GM12878 (cell line): ENCODE measurements at regions of chr1 and their contacts with region 1.

Region 1: GRCh38 chr1:33472349-33472980 is at the start of gene ZSCAN20:
- DNase-seq: peak; percentile 89
- ATAC-seq: peak; percentile 96
- H3K4me3 ChIP-seq: peak within 1 kb of the TSS; percentile 74
- H3K27ac ChIP-seq: peak within 1 kb of the TSS; percentile 55
- H3K4me1 ChIP-seq: peaks cover 7% of the 10 kb centered on the region
- H3K27me3 ChIP-seq: no peaks in the 10 kb centered on the region
- CTCF ChIP-seq: no peak
- EP300 ChIP-seq: no peak
- POLR2A ChIP-seq: peak; percentile 72
- RAD21 ChIP-seq: no peak
- polyA plus RNA-seq, gene ZSCAN20: 0.35 to 0.37 TPM

Region 2: DNA sequence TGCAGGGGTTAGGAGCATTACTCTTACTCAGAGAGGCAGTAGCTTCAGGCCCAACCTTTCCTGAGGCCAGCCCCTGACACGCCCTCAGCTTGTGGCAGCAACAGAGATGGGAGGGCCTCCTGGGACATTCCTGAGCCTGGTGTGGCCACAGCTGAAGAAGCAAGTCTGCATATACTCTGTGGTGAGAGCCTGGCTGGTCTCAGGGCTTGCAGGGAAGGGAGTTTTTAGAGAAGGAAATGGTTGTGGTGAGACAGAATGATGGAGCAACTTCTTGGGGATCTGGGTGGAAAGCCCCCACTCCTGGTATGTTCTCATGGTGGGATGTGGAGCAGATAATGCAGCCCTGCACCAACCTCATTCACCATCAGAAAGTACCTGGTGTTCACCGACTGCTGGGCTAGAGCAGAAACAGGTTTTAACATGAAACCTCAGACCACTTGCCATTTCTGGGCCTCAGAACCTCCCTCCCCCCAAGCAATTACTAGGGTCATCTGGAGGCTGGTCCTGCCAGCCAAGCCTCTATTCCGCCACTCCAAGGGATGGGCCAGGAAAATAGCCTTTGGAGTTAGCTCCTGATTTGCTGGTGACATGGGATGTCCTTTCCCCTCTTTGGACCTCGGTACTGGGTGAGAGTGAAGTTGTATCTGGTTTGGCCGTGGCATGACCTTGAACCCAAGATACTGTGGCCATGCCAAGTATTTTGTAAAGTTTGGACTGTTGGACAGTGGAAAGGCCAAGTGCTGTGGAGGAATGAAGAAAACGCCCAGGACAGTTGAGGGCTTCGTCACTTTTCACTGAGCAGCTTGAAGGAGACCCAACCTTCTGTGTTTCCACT is 479.8 kb before region 1 on chr1:
- CTCF ChIA-PET with region 1: no interaction called
- POLR2A ChIA-PET with region 1: no interaction called
- RAD21 ChIA-PET with region 1: no interaction called
- SMC1A ChIA-PET with region 1: no interaction called
- in situ Hi-C with region 1: no loop called
- intact Hi-C with region 1: no loop called
- DNase-seq: peak; percentile 98
- ATAC-seq: peak; percentile 90
- H3K4me3 ChIP-seq: peak overlapping the region; percentile 48; the same call in 1 of the 2 replicates
- H3K27ac ChIP-seq: peak overlapping the region; percentile 99
- H3K4me1 ChIP-seq: peaks cover 58% of the 10 kb centered on the region
- H3K27me3 ChIP-seq: no peaks in the 10 kb centered on the region
- CTCF ChIP-seq: no peak
- EP300 ChIP-seq: peak; percentile 58 to 91
- POLR2A ChIP-seq: no peak
- RAD21 ChIP-seq: no peak

Region 3: DNA sequence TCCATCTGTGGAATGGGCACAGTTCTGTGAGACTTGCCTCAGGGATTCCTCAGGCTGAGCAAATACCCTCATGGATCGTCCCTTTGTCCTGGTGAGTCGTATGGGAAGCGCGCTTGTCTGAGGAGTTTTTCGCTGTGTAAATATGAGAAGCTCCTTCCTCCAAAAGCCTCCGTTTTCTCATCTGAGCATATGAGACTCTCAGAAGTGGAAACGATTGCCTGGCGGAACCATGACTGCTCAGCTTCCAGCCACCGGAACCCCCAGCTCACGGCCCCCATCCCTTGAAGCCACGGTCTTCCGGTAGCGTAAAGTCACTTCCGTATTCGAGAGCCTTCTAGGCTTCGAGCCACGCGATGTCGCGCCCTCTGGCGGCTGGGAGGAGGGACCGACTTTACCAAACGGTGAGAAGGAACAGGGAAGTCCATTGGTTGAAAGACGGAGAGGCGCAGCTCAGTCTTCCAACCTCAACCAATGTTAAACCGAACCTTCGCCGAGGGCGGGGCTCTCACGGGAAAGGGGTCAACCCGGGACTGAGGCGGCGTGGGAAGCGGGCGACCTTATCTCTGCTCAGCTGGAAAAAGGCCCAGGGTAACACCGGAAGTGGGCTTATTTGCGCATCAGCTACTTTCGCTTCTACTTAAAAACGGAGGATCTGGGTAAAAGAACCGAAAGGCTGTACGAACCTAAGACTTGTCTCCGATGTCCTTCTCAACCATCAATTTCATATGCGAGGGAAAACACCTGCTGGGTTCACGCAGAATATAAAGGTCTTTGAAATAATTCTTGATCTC is 345.3 kb before region 1 on chr1:
- CTCF ChIA-PET with region 1: interaction called, 14 read pairs
- POLR2A ChIA-PET with region 1: no interaction called
- RAD21 ChIA-PET with region 1: interaction called, 7 read pairs
- SMC1A ChIA-PET with region 1: interaction called, 4 read pairs
- in situ Hi-C with region 1: no loop called
- intact Hi-C with region 1: loop called (anchors 1 kb)
- DNase-seq: peak; percentile 99
- ATAC-seq: peak; percentile 95
- H3K4me3 ChIP-seq: peak overlapping the region; percentile 97
- H3K27ac ChIP-seq: peak overlapping the region; percentile 97
- H3K4me1 ChIP-seq: peaks cover 18% of the 10 kb centered on the region
- H3K27me3 ChIP-seq: no peaks in the 10 kb centered on the region
- CTCF ChIP-seq: peak; percentile 92 to 99 (median 99); a peak in 5 of 6 replicates
- EP300 ChIP-seq: no peak
- POLR2A ChIP-seq: peak; percentile 95
- RAD21 ChIP-seq: peak; percentile 31

Region 4: DNA sequence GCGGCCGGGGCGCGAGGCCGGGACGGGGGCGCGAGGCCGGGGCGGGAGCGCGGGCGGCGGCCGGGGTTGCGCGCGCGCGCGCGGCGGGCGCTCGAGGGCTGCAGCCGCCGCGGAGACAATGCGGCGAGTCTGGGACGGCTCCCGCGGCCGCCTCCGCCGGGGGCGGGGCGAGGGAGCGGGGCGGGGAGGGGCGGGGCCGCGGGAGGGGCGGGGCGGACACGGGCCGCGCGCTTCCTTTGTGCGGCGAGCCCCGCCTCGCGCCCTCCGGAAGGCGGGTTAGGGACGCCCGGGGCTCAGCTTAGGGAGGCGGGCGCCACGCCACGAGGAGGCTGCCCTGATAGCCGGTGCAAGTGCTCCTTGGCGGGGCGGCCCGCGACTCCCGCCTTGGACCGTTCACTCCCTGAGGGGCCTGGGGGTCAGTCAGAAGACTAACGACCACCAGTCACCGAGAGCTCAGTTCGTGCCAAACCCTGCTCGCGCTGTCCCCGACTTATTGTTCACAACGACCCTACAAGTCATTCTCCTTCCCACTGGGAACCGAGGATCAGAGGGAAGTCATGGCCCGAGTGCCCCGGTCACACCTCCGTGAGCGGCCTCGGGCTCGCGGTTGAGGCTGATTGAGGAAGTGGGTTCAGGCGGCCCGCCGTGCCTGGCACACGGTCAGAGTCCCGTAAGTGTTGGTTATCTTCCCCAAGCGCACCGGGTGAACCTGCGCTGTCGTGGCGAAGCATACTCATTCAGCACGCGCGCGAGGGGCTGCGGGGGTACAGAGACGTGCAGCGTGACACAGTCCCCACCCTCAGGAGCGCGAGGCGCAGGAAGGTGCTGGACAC is 122.5 kb before region 1 on chr1:
- CTCF ChIA-PET with region 1: interaction called, 8 read pairs
- POLR2A ChIA-PET with region 1: interaction called, 9 read pairs
- RAD21 ChIA-PET with region 1: no interaction called
- SMC1A ChIA-PET with region 1: interaction called, 10 read pairs
- in situ Hi-C with region 1: no loop called
- intact Hi-C with region 1: no loop called
- DNase-seq: no peak
- ATAC-seq: peak; percentile 87
- H3K4me3 ChIP-seq: peak overlapping the region; percentile 75
- H3K27ac ChIP-seq: peak overlapping the region; percentile 92
- H3K4me1 ChIP-seq: peaks cover 18% of the 10 kb centered on the region
- H3K27me3 ChIP-seq: no peaks in the 10 kb centered on the region
- CTCF ChIP-seq: no peak
- EP300 ChIP-seq: no peak
- POLR2A ChIP-seq: peak; percentile 93
- RAD21 ChIP-seq: no peak

Region 5: DNA sequence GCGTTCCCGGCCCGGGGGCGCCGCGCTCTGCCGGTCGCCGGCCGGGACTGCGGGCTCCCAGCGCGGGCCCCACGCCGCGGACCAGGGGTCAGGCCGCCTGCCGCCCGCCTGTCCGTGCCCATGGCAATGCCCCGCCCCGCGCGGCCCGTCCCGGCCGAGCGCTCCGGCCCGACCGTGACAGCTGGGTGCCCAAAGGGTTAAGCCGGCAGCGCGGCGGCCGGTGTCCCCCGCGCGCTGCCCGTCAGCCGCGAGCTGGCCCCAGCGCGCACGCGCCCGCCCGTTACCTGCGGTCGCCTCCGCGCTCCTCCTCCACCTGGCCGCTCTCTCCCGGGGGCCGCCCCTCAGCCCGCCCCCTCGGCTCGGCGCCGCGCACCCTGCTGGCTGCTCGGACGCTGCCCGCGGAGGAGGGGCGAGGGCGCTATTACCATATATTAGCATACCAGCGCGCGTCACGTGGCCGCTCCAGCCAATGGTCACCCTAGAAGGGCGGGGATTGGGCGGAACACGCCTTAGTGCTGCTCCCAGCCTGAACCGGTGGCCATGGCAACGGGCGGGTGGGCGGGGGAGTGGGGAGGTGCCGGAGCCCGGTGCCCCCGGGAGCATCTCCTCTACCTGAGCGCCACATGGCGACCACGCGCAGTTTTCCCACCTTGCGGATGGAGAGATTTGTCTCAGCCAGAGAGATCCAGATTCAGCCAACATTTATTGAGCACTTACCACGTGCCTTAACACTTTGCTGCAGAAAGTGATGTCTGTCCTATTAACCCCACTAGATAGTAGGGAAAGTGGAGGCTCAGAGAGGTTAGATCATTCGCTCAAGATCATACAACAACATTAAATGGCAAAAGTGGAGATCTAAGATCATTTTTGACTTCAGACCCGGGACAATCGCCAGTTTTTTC is 41.5 kb before region 1 on chr1 and contains the start of gene PHC2:
- CTCF ChIA-PET with region 1: interaction called, 15 read pairs
- POLR2A ChIA-PET with region 1: no interaction called
- RAD21 ChIA-PET with region 1: interaction called, 6 read pairs
- SMC1A ChIA-PET with region 1: interaction called, 9 read pairs
- in situ Hi-C with region 1: no loop called
- intact Hi-C with region 1: no loop called
- DNase-seq: peak; percentile 55
- ATAC-seq: peak; percentile 98
- H3K4me3 ChIP-seq: peak within 1 kb of the TSS; percentile 68
- H3K27ac ChIP-seq: no peak within 1 kb of the TSS
- H3K4me1 ChIP-seq: peaks cover 5% of the 10 kb centered on the region; the same call in 1 of the 2 replicates
- H3K27me3 ChIP-seq: peaks cover 3 to 6% of the 10 kb centered on the region in 2 experiments
- CTCF ChIP-seq: peak in 2 of 3 experiments; percentile 10 to 26; a peak in 2 of 6 replicates
- EP300 ChIP-seq: no peak
- POLR2A ChIP-seq: no peak
- RAD21 ChIP-seq: no peak
- polyA plus RNA-seq, gene PHC2: 2.4 to 6.5 TPM

Region 6: DNA sequence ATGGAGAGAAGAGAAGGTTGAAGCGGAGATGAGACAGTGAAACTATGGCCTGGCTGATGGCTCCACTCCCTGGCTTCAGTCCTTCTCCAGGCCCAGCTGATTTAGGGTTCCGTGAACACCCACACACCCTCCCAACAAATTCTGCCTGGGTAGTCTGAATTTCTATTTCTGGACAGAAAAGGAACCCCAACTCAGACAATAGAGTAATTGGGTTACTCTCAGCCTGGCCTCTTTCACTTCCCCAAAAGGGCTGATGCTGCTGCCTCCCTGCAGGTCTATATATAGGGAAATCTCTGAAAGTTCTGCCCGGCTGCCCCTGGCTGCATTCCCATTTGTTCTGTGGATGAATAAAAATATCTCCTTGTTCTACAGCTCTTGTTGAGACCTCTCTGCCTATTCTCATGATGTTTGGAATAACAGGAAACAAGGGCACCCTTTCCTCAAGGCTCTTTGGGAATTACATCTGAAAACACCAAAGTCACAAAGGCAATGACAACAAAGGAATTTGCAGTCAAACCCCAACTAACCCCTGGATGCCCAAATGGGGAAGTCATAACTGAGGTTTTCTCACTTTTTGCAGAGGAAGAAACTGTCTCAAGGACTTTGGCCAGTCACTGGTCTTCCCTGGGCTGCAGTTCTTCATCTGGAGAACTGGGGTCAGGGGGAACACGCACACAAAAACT is 11.4 kb before region 1 on chr1:
- CTCF ChIA-PET with region 1: interaction called, 111 read pairs
- POLR2A ChIA-PET with region 1: interaction called, 10 read pairs
- RAD21 ChIA-PET with region 1: interaction called, 54 read pairs
- SMC1A ChIA-PET with region 1: interaction called, 112 read pairs
- in situ Hi-C with region 1: no loop called
- intact Hi-C with region 1: no loop called
- DNase-seq: peak; percentile 67
- ATAC-seq: peak; percentile 86
- H3K4me3 ChIP-seq: peak overlapping the region; percentile 49; the same call in 1 of the 2 replicates
- H3K27ac ChIP-seq: peak overlapping the region; percentile 73
- H3K4me1 ChIP-seq: peaks cover 51% of the 10 kb centered on the region
- H3K27me3 ChIP-seq: no peaks in the 10 kb centered on the region
- CTCF ChIP-seq: no peak
- EP300 ChIP-seq: peak; percentile 76 to 85; a peak in 3 of 4 replicates
- POLR2A ChIP-seq: no peak
- RAD21 ChIP-seq: no peak

Region 7: DNA sequence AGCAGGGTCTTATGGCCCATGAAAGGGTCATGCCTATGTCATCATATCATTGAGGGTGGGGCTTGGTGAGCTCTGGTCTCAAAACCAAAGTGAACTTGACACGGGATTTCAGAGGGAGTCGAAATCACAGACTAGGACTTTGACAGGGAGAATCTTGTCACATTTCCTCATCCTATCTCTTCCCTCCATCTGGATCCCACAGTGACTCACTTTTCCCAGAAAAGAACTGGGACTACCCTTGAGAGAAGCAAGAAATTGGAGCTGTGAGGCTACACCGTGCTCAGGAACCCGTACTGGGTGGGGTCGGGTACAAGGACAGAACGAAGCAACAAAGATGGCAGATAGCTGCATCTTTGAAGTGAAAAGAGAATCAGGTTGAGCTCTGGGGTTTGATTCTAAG is 69.5 kb after region 1 on chr1:
- CTCF ChIA-PET with region 1: no interaction called
- POLR2A ChIA-PET with region 1: no interaction called
- RAD21 ChIA-PET with region 1: no interaction called
- SMC1A ChIA-PET with region 1: no interaction called
- in situ Hi-C with region 1: no loop called
- intact Hi-C with region 1: no loop called
- DNase-seq: no peak
- ATAC-seq: no peak
- H3K4me3 ChIP-seq: no peak overlapping the region
- H3K27ac ChIP-seq: no peak overlapping the region
- H3K4me1 ChIP-seq: no peaks in the 10 kb centered on the region
- H3K27me3 ChIP-seq: no peaks in the 10 kb centered on the region; a peak in 2 of 4 replicates
- CTCF ChIP-seq: no peak
- EP300 ChIP-seq: no peak
- POLR2A ChIP-seq: no peak
- RAD21 ChIP-seq: no peak

Region 8: GRCh38 chr1:33616773-33617172 is 144.3 kb after region 1 on chr1:
- CTCF ChIA-PET with region 1: interaction called, 26 read pairs
- POLR2A ChIA-PET with region 1: no interaction called
- RAD21 ChIA-PET with region 1: interaction called, 3 read pairs
- SMC1A ChIA-PET with region 1: interaction called, 5 read pairs
- in situ Hi-C with region 1: no loop called
- intact Hi-C with region 1: loop called (anchors 5 kb)
- DNase-seq: no peak
- ATAC-seq: no peak
- H3K4me3 ChIP-seq: no peak overlapping the region
- H3K27ac ChIP-seq: no peak overlapping the region
- H3K4me1 ChIP-seq: no peaks in the 10 kb centered on the region
- H3K27me3 ChIP-seq: peaks cover 2 to 3% of the 10 kb centered on the region in 2 experiments; a peak in 3 of 4 replicates
- CTCF ChIP-seq: no peak
- EP300 ChIP-seq: no peak
- POLR2A ChIP-seq: no peak
- RAD21 ChIP-seq: no peak

Region 9: DNA sequence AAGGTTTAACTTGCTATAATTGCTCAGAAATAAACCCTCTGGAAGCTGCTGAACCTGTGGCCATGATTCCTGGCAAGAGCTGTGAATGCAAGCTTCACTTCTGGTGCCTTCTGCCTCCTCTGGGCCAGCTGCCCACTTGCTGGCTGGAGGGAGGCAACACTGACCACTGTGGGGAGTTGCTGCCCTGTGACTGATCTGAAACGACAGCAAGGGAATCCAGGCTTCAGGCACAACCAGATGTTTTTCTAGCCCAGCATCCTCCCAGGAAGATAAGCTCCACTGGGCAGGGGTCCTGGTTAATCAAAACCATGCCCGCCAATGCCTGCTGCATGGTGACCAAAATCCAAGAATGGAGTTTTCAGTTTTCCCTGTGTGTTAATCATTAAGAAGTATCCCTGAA is 211.4 kb after region 1 on chr1:
- CTCF ChIA-PET with region 1: no interaction called
- POLR2A ChIA-PET with region 1: no interaction called
- RAD21 ChIA-PET with region 1: no interaction called
- SMC1A ChIA-PET with region 1: no interaction called
- in situ Hi-C with region 1: no loop called
- intact Hi-C with region 1: no loop called
- DNase-seq: no peak
- ATAC-seq: no peak
- H3K4me3 ChIP-seq: no peak overlapping the region
- H3K27ac ChIP-seq: no peak overlapping the region
- H3K4me1 ChIP-seq: no peaks in the 10 kb centered on the region
- H3K27me3 ChIP-seq: peaks cover 0 to 1% of the 10 kb centered on the region in 2 experiments; a peak in 2 of 4 replicates
- CTCF ChIP-seq: no peak
- EP300 ChIP-seq: no peak
- POLR2A ChIP-seq: no peak
- RAD21 ChIP-seq: no peak

Region 10: GRCh38 chr1:33719771-33720670 is 247.6 kb after region 1 on chr1:
- CTCF ChIA-PET with region 1: no interaction called
- POLR2A ChIA-PET with region 1: no interaction called
- RAD21 ChIA-PET with region 1: no interaction called
- SMC1A ChIA-PET with region 1: no interaction called
- in situ Hi-C with region 1: no loop called
- intact Hi-C with region 1: no loop called
- DNase-seq: no peak
- ATAC-seq: no peak
- H3K4me3 ChIP-seq: no peak overlapping the region
- H3K27ac ChIP-seq: no peak overlapping the region
- H3K4me1 ChIP-seq: no peaks in the 10 kb centered on the region
- H3K27me3 ChIP-seq: peaks cover 0 to 1% of the 10 kb centered on the region in 2 experiments; a peak in 1 of 4 replicates
- CTCF ChIP-seq: no peak
- EP300 ChIP-seq: no peak
- POLR2A ChIP-seq: no peak
- RAD21 ChIP-seq: no peak